Endothelial cell of umbilical vein (primary cell): ENCODE measurements at regions of chr2 and their contacts with region 1.

Region 1: DNA sequence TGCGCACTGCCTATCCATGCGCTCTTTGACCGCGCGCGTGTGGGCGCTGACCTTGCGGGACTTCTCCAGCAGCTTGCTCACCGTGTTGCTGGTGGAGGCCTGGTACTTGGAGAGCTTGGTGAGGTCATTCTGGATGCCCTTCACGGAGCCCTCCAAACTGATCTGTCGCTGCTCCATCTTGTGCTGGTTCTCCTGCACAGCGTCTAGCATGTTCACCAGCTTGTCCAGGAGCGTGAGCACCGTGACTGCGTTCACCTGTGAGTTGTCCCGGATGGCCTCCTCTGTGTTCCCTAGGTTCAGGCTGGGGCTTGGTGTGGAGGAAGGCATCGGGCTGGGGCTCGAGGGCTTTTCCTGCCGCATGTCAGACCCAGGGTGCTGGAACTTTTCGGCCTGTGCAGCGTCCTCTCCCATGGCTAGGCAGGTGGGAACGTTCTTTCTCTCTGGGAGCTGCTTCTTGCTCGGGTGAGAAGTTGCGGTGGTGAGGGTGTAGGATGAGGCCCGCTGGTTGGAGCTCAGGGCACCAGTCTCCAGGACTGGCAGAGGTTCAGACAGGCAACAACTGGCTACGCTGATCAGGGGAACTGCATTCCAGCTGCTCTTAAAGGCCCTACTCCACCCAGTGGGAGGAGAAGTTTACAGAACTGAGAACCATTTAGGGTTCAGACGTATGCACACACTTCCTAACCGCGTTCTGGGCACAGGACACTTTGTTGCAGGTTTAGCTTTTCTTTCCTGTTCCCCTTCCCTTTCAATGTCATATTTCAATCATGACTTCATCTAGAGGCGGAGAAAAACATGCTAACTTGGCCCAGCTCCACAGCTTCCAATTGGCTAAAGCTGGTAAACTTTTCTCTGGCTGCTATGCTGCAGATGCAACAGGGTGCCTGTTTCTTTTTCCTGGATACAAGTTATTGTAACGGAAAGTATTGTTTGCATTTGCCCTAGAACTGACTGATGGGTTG is at the start of gene CAVIN2:
- DNase-seq: peak; percentile 100
- H3K4me3 ChIP-seq: peak within 1 kb of the TSS; percentile 82 to 99 (median 95)
- H3K27ac ChIP-seq: peak within 1 kb of the TSS; percentile 76
- H3K4me1 ChIP-seq: peaks cover 21% of the 10 kb centered on the region
- H3K27me3 ChIP-seq: no peaks in the 10 kb centered on the region
- CTCF ChIP-seq: peak in 1 of 2 donors; percentile 17
- POLR2A ChIP-seq: peak; percentile 98
- total RNA-seq, gene CAVIN2: 171 and 202 TPM in 2 replicates

Region 2: GRCh38 chr2:191857259-191857805 is 10.5 kb after region 1 on chr2:
- CTCF ChIA-PET with region 1: interaction called, 15 read pairs
- POLR2A ChIA-PET with region 1: interaction called, 43 read pairs
- dilution Hi-C with region 1: no loop called
- intact Hi-C with region 1: loop called (anchors 1 kb)
- DNase-seq: peak; percentile 97
- H3K4me3 ChIP-seq: no peak overlapping the region
- H3K27ac ChIP-seq: peak overlapping the region; percentile 93
- H3K4me1 ChIP-seq: peaks cover 56% of the 10 kb centered on the region
- H3K27me3 ChIP-seq: no peaks in the 10 kb centered on the region
- CTCF ChIP-seq: no peak
- POLR2A ChIP-seq: peak; percentile 74

Region 3: DNA sequence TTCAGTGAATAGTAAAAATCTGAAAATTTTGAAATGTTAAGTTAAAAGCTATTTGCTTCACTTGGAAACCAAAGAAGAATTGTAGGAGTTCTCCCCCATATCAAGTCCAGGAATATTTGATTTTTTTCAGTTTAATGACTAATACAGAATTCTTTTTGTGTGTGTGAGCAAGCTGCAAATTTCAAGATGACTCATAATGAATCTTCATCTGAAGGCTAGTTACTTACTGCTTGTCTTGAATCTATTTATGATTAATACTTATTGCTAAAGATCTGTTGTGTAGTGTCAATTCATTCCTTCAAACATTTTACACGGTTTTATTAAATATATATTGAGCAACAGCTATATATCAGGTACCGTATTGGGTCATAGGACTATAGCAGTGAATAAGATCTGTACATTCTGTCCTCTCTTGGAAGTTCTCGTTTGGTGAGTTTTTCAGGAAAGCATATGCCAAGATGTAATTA is 47.9 kb after region 1 on chr2:
- CTCF ChIA-PET with region 1: no interaction called
- POLR2A ChIA-PET with region 1: interaction called, 4 read pairs
- dilution Hi-C with region 1: no loop called
- intact Hi-C with region 1: loop called (anchors 1 kb)
- DNase-seq: peak; percentile 61
- H3K4me3 ChIP-seq: no peak overlapping the region
- H3K27ac ChIP-seq: peak overlapping the region; percentile 28
- H3K4me1 ChIP-seq: peaks cover 27% of the 10 kb centered on the region
- H3K27me3 ChIP-seq: no peaks in the 10 kb centered on the region
- CTCF ChIP-seq: no peak
- POLR2A ChIP-seq: no peak

Region 4: GRCh38 chr2:191910518-191910917 is 63.7 kb after region 1 on chr2:
- CTCF ChIA-PET with region 1: interaction called, 3 read pairs
- POLR2A ChIA-PET with region 1: no interaction called
- dilution Hi-C with region 1: no loop called
- intact Hi-C with region 1: loop called (anchors 2 kb)
- DNase-seq: peak; percentile 92
- H3K4me3 ChIP-seq: no peak overlapping the region
- H3K27ac ChIP-seq: peak overlapping the region; percentile 36
- H3K4me1 ChIP-seq: peaks cover 34% of the 10 kb centered on the region
- H3K27me3 ChIP-seq: no peaks in the 10 kb centered on the region
- CTCF ChIP-seq: no peak
- POLR2A ChIP-seq: no peak

Region 5: DNA sequence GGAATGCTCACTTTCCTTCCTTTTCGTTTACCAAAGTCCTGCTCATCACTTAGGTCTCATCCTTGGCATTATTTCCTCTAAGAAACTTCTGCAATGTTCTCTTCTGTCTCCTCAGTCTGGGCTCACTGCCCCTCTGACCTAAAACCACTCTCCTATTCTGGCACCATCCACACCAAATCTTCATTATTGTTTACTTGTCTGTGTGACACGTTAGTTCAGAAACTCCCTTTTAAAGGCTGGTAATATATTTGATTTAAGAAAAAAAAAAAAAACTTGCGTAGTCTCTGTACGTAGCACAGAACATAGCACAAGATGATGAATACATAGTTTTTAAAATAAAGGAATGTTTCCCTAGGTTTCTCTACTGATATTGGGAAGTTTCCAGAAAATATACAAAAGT is 118.9 kb after region 1 on chr2:
- CTCF ChIA-PET with region 1: no interaction called
- POLR2A ChIA-PET with region 1: no interaction called
- dilution Hi-C with region 1: no loop called
- intact Hi-C with region 1: no loop called
- DNase-seq: no peak
- H3K4me3 ChIP-seq: no peak overlapping the region
- H3K27ac ChIP-seq: no peak overlapping the region
- H3K4me1 ChIP-seq: peaks cover 12% of the 10 kb centered on the region
- H3K27me3 ChIP-seq: no peaks in the 10 kb centered on the region
- CTCF ChIP-seq: no peak
- POLR2A ChIP-seq: no peak

Region 6: DNA sequence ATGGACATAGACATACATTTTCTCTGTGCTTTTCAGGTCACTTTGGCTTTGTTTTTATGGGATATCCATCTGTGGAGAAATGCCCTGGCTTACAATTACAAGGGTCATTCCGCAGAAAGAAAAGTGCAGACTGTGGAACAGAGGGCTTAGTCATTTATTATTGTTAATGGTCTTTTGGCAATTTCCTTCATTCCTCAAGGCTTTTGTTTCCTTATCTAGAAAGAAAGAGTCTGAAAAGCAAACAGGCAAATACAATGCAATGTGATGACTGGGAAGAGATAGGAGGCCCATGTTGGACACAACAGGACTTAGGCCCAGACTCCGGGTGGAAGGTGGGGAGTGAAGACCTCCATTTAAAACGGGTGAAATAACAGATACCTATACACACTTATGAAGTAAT is 129.6 kb after region 1 on chr2:
- CTCF ChIA-PET with region 1: no interaction called
- POLR2A ChIA-PET with region 1: interaction called, 4 read pairs
- dilution Hi-C with region 1: no loop called
- intact Hi-C with region 1: loop called (anchors 1 kb)
- DNase-seq: peak; percentile 99
- H3K4me3 ChIP-seq: no peak overlapping the region
- H3K27ac ChIP-seq: peak overlapping the region; percentile 86
- H3K4me1 ChIP-seq: peaks cover 44% of the 10 kb centered on the region
- H3K27me3 ChIP-seq: no peaks in the 10 kb centered on the region
- CTCF ChIP-seq: no peak
- POLR2A ChIP-seq: peak; percentile 64